Transverse colon (tissue), 4 donors: ENCODE measurements at regions of chr3 and their contacts with region 1.

Region 1: DNA sequence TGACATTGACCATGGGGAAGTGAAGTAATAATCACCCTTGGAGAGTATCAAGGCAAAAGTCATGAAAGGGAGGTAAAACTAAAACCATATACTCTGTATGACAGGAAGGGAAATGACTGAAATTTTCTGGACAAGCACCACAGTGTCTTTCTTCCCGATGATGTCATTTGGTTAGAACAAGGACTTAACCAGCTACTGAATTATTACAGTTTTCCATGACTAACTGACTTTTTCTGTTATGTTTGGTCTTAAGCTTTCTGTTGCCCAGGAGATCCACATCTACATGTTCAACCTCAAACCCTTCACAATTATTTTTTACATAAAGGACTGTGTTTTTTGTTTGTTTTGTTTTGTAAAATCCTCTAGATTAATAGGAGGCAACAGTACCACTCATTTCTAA is 191.9 kb upstream of the IL12A start:
- DNase-seq: no peak
- H3K4me3 ChIP-seq: no peak overlapping the region
- H3K27ac ChIP-seq: peak overlapping the region; percentile 72 to 82 (median 78)
- H3K4me1 ChIP-seq: peaks cover 0 to 51% (median 9%) of the 10 kb centered on the region in 4 donors
- H3K27me3 ChIP-seq: no peaks in the 10 kb centered on the region
- CTCF ChIP-seq: no peak
- EP300 ChIP-seq: no peak
- POLR2A ChIP-seq: no peak

Region 2: DNA sequence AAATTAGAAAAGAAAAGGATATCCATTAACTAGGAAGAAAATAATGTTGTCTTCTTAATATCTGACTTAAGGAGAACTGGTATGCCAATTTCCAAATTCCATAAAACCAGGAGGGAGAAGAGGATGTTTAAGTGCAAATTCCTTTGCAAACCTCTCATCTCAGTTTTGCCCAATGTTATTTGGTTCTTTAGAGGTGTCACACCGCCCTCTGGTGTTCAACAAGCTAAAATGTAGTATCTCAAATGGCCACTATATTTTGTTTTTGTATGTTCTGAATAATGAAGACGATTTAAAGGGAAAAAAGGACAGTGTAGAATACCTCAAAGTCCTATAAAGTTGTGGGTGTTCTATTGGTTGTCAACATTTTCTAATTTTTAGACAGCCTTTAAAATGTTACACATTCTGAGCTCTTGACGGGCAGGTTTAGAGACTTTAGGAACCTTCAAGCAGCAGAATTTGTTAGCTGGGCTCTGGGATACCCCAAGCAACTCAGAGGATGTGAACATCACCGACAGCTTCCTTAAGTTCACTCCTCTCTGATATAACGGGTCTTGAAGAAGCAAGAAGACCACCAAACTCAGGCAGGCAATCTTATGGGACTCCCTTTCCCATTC is 536.6 kb before region 1 on chr3:
- in situ Hi-C with region 1: loop called (anchors 10 to 25 kb)
- intact Hi-C with region 1: no loop called
- DNase-seq: peak; percentile 25
- H3K4me3 ChIP-seq: no peak overlapping the region
- H3K27ac ChIP-seq: no peak overlapping the region
- H3K4me1 ChIP-seq: no peaks in the 10 kb centered on the region
- H3K27me3 ChIP-seq: no peaks in the 10 kb centered on the region
- CTCF ChIP-seq: peak; percentile 66 to 76 (median 70)
- EP300 ChIP-seq: no peak
- POLR2A ChIP-seq: no peak